ENCODE measurements at regions of chr3 and their contacts with region 1.

Region 1: DNA sequence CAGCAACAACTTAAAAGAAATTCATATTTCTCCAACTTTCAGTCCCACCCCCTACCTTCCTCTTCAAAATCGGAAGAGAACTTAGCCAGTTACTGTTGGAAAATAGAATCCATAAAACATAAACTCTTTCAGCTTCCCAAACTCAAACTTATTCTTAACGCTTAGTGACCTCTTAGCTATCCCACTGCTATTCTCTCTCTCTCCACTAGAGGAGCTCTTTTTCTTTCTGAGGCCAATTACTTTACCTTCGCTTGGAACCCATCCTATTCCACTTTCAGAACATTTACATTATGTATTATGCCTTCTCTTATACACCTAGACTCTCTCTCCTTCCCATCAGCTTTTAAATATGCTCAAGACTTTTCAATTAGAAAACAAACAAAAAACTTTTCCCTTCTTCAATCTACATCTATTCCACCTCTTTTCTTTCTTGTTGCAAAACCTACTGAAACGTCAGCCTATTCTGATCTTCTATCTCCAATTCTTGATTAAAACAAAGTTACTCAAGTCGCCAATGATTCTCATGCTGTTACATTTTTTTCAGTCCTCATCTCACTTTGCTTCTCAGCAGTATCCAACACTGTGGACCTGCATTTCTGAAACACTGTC is 13.4 kb upstream of the GHSR start:
- DNase-seq: no peak
- H3K4me3 Mint-ChIP-seq: no peak overlapping the region
- H3K27ac Mint-ChIP-seq: no peak overlapping the region
- H3K4me1 Mint-ChIP-seq: peaks cover 20% of the 10 kb centered on the region
- H3K27me3 Mint-ChIP-seq: no peaks in the 10 kb centered on the region
- CTCF ChIP-seq: peak; percentile 97

Region 2: DNA sequence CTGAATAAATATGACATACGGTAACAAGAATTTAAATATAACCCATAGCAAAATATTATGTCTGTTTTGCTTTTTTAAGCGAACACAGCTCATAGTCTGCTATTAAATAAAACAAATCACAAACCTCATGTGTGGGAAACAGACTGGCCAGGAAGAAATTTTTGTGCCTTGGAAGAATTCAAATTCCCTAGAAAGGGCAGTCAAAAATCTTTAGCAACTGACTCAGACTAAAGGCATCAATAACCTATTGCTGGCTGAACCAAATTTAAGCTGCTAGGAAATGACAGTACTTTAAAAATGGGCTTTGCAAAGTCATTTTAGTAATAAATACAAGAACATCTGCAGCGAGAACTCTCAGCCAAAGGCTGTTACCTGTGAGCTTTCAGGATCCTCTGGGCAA is 802.8 kb before region 1 on chr3:
- CTCF ChIA-PET with region 1: no interaction called
- intact Hi-C with region 1: no loop called
- DNase-seq: no peak
- H3K4me3 Mint-ChIP-seq: no peak overlapping the region
- H3K27ac Mint-ChIP-seq: no peak overlapping the region
- H3K4me1 Mint-ChIP-seq: no peaks in the 10 kb centered on the region
- H3K27me3 Mint-ChIP-seq: no peaks in the 10 kb centered on the region
- CTCF ChIP-seq: no peak

Region 3: GRCh38 chr3:172405914-172406313 is 55.7 kb before region 1 on chr3:
- CTCF ChIA-PET with region 1: interaction called, 3 read pairs
- intact Hi-C with region 1: loop called (anchors 5 kb)
- DNase-seq: no peak
- H3K4me3 Mint-ChIP-seq: no peak overlapping the region
- H3K27ac Mint-ChIP-seq: peak overlapping the region; percentile 67
- H3K4me1 Mint-ChIP-seq: no peaks in the 10 kb centered on the region
- H3K27me3 Mint-ChIP-seq: no peaks in the 10 kb centered on the region
- CTCF ChIP-seq: no peak

Region 4: DNA sequence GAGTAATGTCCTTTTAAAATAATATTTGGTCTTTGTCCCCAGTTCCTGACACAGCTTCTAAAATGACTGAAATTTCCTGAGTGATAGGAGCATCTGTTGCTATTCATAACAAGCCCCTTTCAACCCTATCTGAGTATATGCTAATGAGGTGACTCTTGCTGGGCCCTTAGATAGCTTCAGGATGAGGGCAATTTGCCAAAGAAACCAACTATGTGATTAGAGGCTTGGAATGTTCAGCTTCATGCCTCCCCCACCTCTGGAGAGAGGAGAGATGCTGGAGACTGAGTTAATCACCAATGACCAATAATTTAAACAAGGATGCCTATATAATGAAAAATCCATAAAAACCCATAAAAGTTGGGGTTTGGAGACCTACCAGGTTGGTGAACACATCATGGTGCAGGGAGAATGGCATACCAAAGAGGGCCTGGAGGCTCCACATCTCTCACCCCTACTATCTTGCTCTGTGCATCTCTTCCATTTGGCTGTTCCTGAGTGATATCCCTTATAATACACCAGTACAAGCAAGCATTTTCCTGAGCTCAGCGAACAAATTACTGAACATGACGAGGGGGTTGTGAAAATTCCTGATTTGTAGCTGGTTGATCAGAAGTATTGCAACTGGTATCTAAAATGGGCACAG is 478.1 kb after region 1 on chr3:
- CTCF ChIA-PET with region 1: no interaction called
- intact Hi-C with region 1: no loop called
- DNase-seq: no peak
- H3K4me3 Mint-ChIP-seq: no peak overlapping the region
- H3K27ac Mint-ChIP-seq: no peak overlapping the region
- H3K4me1 Mint-ChIP-seq: peaks cover 30% of the 10 kb centered on the region
- H3K27me3 Mint-ChIP-seq: no peaks in the 10 kb centered on the region
- CTCF ChIP-seq: no peak

Measured in Calu3 (cell line).